ENCODE measurements at regions of chr2 and their contacts with region 1.

Region 1: GRCh38 chr2:46984642-46985476 is 69.3 kb upstream of the MCFD2 start:
- DNase-seq: peak; percentile 84
- H3K4me3 Mint-ChIP-seq: peak overlapping the region; percentile 57
- H3K27ac Mint-ChIP-seq: peak overlapping the region; percentile 97
- H3K4me1 Mint-ChIP-seq: peaks cover 59% of the 10 kb centered on the region
- H3K27me3 Mint-ChIP-seq: no peaks in the 10 kb centered on the region

Region 2: DNA sequence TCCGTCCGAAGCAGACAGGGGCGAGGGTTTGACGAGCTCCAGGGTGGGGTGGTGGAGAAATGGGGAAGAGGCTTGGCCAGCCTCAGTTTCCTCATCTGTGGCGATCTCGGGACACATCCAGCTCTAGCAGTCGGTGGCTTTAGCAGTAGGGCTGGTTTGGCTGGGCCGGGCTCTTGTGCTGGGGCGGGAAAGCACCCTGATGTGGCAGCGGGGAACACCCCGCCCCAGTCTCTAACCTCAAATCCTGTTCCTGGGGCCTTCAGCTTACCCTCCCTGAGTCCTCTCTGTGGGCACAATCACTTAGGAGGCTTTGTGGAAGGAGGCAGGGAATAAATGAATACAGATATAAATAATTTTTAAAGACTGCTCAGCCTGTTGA is 42.7 kb before region 1 on chr2:
- CTCF ChIA-PET with region 1: interaction called, 4 read pairs
- POLR2A ChIA-PET with region 1: interaction called, 13 read pairs
- intact Hi-C with region 1: loop called (anchors 1 kb)
- DNase-seq: peak; percentile 85
- H3K4me3 Mint-ChIP-seq: peak overlapping the region; percentile 99
- H3K27ac Mint-ChIP-seq: peak overlapping the region; percentile 100
- H3K4me1 Mint-ChIP-seq: peaks cover 46% of the 10 kb centered on the region
- H3K27me3 Mint-ChIP-seq: no peaks in the 10 kb centered on the region

Region 3: GRCh38 chr2:47011264-47011663 is 26.4 kb after region 1 on chr2:
- CTCF ChIA-PET with region 1: no interaction called
- POLR2A ChIA-PET with region 1: no interaction called
- intact Hi-C with region 1: no loop called
- DNase-seq: no peak
- H3K4me3 Mint-ChIP-seq: no peak overlapping the region
- H3K27ac Mint-ChIP-seq: no peak overlapping the region
- H3K4me1 Mint-ChIP-seq: no peaks in the 10 kb centered on the region
- H3K27me3 Mint-ChIP-seq: no peaks in the 10 kb centered on the region